ENCODE measurements at regions of chr3 and their contacts with region 1.

Region 1: DNA sequence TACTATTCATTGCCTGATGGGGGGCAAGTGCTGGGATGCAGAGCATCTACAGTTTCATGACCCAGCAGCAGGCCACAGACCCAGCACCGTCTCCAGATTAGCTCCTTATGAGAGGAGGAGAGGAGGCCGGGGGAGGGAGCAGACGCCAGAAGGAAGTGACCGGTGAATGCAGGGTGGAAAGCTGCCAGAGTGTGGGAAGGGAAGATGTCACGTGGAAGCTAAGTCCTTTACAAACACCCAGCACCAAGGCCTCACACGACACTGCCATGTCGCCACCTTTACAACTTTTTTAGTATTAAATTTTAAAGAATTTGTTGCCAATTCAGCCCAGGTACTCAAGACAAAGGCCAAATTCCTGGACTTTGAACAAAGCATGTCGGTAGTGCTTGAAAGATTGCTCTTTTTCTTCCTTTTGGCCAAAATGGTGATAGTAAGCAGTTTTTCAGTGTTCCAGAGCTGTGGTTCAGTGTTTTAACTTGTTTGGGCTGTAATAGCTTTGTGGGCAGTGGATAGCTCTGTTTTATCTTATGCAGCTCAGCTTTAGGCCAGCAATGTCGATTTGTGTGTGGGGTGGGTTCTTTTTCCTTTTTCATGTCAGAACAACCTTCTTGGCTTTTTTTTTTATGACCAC is 58.2 kb downstream of the ZBTB38 start:
- DNase-seq: no peak
- ATAC-seq: peak; percentile 30
- H3K4me3 Mint-ChIP-seq: no peak overlapping the region
- H3K27ac Mint-ChIP-seq: no peak overlapping the region
- H3K4me1 Mint-ChIP-seq: peaks cover 19% of the 10 kb centered on the region
- H3K27me3 Mint-ChIP-seq: no peaks in the 10 kb centered on the region
- CTCF ChIP-seq: no peak

Region 2: GRCh38 chr3:141441381-141442364 is 15.2 kb after region 1 on chr3:
- CTCF ChIA-PET with region 1: interaction called, 28 read pairs
- POLR2A ChIA-PET with region 1: no interaction called
- DNase-seq: peak; percentile 75
- ATAC-seq: peak; percentile 97
- H3K4me3 Mint-ChIP-seq: no peak overlapping the region
- H3K27ac Mint-ChIP-seq: 0 out of 2 replicates have a peak overlapping the region, but pooled peaks have one; percentile 79
- H3K4me1 Mint-ChIP-seq: peaks cover 8% of the 10 kb centered on the region
- H3K27me3 Mint-ChIP-seq: no peaks in the 10 kb centered on the region
- CTCF ChIP-seq: peak; percentile 77

Measured in WTC11 (cell line).